PC-9 (cell line): ENCODE measurements at regions of chr10 and their contacts with region 1.

Region 1: DNA sequence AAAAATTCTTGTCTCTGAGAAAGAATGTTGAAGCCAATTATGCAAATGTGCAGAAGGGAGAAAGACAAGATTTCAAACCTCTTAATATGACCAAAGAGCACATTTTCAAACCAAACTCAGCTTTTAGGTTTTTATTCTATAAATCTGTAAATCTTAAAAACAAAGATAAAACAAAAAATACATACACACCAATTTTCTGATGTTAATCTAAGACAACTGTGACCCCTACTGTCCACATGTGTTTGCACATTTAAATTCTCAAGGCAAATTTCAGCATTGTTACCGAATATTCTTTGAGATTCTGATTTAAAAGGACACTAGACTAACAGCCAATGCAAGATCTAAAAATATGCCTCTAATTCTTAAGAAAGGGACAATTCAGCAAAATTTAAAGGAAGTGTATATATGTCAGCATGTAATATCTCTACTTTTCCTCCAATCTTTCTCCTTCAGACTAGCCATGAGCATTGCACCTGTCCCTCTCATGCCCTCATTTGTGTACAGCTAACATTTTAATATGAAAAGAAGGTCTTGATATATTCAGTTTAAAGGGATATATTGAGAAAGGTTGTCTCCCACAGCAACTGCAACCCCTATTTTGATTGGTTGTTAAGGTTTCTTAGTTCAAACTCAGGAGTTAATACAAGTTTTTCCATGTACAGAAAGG is 417.9 kb downstream of the IPMK start:
- DNase-seq: no peak
- H3K4me3 ChIP-seq: no peak overlapping the region
- H3K27ac ChIP-seq: no peak overlapping the region
- H3K4me1 ChIP-seq: no peaks in the 10 kb centered on the region
- H3K27me3 ChIP-seq: no peaks in the 10 kb centered on the region
- CTCF ChIP-seq: peak; percentile 75

Region 2: GRCh38 chr10:57822965-57823364 is 26.9 kb before region 1 on chr10:
- CTCF ChIA-PET with region 1: no interaction called
- POLR2A ChIA-PET with region 1: interaction called, 11 read pairs
- intact Hi-C with region 1: no loop called
- DNase-seq: no peak
- H3K4me3 ChIP-seq: no peak overlapping the region
- H3K27ac ChIP-seq: no peak overlapping the region
- H3K4me1 ChIP-seq: no peaks in the 10 kb centered on the region
- H3K27me3 ChIP-seq: no peaks in the 10 kb centered on the region
- CTCF ChIP-seq: no peak

Region 3: DNA sequence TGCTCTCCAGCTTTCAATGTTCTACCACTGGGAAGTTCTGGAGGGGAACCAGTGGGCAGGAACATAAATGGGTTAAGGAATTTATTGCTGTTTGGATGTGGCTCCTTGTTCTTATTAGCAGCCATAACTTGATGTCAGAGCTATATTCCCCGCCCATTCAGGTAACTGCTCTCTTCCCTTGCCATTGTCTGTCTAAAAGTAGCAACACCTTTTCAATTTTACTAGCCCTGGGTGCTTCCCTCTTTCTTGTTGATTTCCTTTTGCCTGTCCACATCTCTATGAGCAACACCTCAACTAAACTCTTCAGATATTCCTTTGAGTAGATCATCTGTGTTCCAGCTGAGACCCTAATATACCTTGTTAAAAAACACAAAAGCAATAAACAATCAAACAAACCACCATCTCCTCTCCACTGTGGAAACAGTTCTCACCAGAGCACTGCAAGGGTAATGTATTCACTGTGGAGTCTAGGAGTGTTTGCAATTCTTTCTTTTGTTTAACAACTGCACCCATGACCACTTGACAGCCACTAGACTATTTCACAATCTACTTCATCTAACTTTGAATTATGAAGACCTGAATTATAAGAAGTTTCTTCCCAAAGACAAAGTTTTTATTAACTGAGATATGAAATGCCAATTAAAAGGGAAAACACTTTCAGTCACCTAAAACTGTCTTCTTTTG is 18.8 kb before region 1 on chr10:
- CTCF ChIA-PET with region 1: no interaction called
- POLR2A ChIA-PET with region 1: interaction called, 28 read pairs
- intact Hi-C with region 1: no loop called
- DNase-seq: no peak
- H3K4me3 ChIP-seq: no peak overlapping the region
- H3K27ac ChIP-seq: no peak overlapping the region
- H3K4me1 ChIP-seq: no peaks in the 10 kb centered on the region
- H3K27me3 ChIP-seq: no peaks in the 10 kb centered on the region
- CTCF ChIP-seq: no peak